Dorsolateral prefrontal cortex (tissue), 120 donors: ENCODE measurements at regions of chr6 and their contacts with region 1.

Region 1: DNA sequence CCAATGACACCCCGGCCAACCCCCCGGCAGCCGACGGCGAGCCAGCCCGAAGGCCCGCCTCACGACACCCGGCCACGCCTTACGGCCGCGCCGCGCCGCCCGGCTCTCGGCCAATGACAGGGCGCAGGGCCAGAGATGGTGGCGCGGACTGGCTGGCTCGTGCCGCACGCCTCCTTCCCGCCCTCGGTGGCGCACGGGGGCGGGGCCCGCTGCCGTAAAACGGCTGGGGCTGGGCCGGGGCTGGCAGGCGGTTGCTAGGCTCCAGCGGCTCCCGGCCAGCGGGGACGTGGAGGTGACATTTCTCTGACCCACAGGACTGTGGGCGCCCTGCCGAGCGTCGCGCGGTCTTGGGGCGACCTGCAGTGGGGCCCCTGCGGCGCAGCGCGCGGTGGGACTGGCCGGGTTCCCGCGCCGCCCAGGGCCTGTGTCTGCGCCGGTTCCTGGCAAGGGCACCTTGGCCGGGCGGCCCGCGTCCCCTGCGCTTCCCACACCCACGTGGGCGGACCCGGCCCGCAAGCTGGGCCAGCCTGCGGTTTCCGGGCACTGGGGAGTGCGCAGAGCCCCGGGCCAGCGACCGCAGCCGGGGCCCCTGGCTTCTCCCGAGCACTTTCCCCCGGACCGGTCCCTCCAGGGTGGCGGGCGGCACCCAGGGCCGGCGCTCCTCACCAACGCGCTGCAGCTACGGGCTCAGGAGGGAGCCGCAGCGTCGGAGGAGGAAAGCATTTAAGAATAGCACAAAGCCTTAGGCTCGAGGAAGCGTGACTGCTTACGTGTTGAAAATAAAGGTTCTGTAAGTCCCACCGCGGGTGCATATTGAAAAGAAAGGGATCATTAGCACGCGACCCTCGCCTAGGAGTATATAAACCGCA is at the start of gene MPC1:
- DNase-seq: peak; percentile 88 to 99 (median 95)
- H3K4me3 ChIP-seq: peak within 1 kb of the TSS; percentile 73 to 99 (median 92)
- H3K27ac ChIP-seq: peak within 1 kb of the TSS; percentile 67 to 98 (median 94)
- H3K27me3 ChIP-seq: no peaks in the 10 kb centered on the region
- CTCF ChIP-seq: peak in 30 of 56 donors; percentile 10 to 64 (median 28)
- total RNA-seq, gene MPC1: 59.1 to 146 (median 85.0) TPM

Region 2: DNA sequence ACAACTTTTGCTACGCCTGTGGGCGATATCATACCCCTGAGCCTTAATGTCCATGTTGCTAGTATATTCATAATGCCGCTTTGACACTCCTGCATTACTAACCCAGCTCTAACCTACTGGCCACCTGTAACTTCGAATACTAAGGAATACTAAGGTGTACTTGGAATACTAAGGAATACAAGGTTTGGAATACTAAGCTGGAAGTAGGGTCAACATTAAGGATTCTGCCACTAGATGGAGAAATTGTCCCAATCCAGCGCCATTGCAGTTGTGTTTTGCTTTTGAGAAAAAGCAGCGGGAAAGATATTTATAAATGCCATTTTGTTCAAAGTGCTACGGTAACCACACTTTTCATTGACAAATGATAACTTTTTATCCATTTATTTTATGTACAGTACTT is 226.2 kb before region 1 on chr6:
- intact Hi-C with region 1: loop called in 1 of 2 experiments (anchors 10 kb)
- DNase-seq: no peak
- H3K4me3 ChIP-seq: no peak overlapping the region
- H3K27ac ChIP-seq: no peak overlapping the region
- H3K27me3 ChIP-seq: peaks cover 0 to 17% (median 2%) of the 10 kb centered on the region in 45 donors
- CTCF ChIP-seq: peak in 54 of 56 donors; percentile 23 to 75 (median 57)

Region 3: DNA sequence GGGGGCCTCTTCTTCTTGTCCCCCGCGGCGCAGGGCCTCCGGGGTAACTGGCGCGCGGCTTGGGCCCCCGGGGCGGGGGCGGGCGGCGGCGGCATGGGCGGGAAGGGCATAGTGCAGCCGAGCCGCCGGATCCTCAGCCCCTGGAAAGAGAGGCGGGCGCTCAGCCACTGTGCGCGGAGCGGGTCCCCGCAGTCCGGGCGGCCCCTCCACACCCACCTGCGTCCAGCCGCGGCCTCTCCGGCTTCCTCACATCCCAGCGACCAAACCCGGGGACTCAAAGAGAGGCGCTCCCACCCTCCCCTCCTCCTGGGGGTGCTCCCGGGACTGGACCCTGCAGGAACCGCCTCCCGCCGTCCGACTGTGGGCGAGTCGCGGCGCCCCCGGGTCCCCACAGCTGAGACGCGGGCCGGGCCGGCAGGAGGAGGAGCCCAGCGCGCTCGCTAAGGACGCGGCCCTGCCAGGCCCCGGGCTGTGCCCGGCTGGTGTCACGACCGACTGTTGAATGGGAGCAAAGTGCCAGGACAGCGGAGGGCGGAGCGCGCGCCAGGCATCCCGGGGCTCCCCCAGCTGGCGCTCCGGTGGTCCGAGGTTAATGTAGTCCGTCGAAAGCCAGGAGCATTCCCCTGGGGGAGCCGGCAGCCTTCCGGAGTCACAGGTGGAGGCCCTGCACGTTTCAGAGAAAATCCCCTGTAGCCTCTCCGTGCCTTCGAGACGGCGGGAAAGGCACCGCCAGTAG is 75.0 kb before region 1 on chr6 and contains the start of gene PRR18:
- intact Hi-C with region 1: loop called in 1 of 2 experiments (anchors 1 kb)
- DNase-seq: peak; percentile 29 to 87 (median 81)
- H3K4me3 ChIP-seq: peak within 1 kb of the TSS; percentile 31 to 80 (median 64)
- H3K27ac ChIP-seq: peak within 1 kb of the TSS; percentile 49 to 100 (median 95)
- H3K27me3 ChIP-seq: peaks cover 0 to 42% (median 20%) of the 10 kb centered on the region in 45 donors
- CTCF ChIP-seq: peak in 42 of 56 donors; percentile 11 to 61 (median 41)
- total RNA-seq, gene PRR18: 7.1 to 260 (median 51.2) TPM

Region 4: DNA sequence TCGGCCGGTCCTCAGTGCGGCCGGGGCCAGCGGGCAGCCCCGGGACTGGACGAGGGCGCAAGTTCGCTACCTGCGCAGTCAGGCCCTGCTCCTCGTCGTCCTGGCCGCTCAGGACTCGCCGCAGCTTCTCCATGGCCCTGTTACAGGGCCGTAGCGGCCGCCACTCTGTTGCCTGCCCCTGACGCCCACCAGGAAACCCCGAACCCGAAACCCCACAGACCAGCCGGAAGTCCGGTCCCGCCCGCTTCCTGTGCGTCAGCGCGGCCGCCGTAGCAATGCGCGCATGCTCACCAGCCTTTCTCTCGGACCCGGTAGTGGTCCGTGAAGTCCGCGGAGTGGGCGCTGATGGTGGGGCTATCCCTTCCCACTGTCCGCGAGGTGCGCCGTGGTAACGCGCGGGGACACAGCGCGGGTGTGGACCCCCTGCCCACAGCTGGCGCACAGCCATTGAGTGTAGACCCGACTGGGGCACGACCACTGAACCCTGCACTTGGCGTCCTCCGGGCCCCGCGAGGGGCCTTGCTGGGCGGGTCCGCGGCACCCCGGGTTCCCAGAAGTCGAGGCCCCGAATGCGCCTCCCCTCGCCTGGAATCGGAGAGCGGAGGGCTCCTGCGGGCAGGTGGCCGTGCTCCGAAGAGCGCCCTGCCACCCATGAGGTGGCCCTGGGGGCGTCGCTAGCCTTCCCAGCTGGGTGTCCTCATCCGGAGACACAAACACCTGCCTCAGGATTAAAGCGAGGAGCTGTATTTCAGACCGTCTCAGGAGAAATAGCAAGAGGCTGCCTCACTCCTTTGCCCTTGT is 40.6 kb before region 1 on chr6 and contains the start of gene SFT2D1:
- intact Hi-C with region 1: loop called (anchors 1 to 2 kb)
- DNase-seq: peak; percentile 72 to 91 (median 81)
- H3K4me3 ChIP-seq: peak within 1 kb of the TSS; percentile 63 to 100 (median 96)
- H3K27ac ChIP-seq: peak within 1 kb of the TSS; percentile 12 to 98 (median 90)
- H3K27me3 ChIP-seq: no peaks in the 10 kb centered on the region
- CTCF ChIP-seq: peak in 14 of 56 donors; percentile 6 to 30 (median 21)
- total RNA-seq, gene SFT2D1: 32.7 to 79.7 (median 45.4) TPM